Gastrocnemius medialis (tissue), 4 donors: ENCODE measurements at regions of chr17 and their contacts with region 1.

Region 1: GRCh38 chr17:27892866-27893769 is at the start of gene LYRM9:
- DNase-seq: peak; percentile 75 to 88
- ATAC-seq: peak; percentile 96 to 97
- H3K4me3 ChIP-seq: peak within 1 kb of the TSS; percentile 66 to 91 (median 85)
- H3K27ac ChIP-seq: peak within 1 kb of the TSS; percentile 84 to 88 (median 86)
- H3K4me1 ChIP-seq: peaks cover 6 to 7% of the 10 kb centered on the region in 2 donors
- H3K27me3 ChIP-seq: no peaks in the 10 kb centered on the region
- CTCF ChIP-seq: peak; percentile 81 to 98 (median 90)
- POLR2A ChIP-seq: peak; percentile 21 to 30
- total RNA-seq, gene LYRM9: 5.9 to 37.2 (median 9.6) TPM

Region 2: GRCh38 chr17:27793168-27793905 is 99.8 kb before region 1 on chr17:
- in situ Hi-C with region 1: loop called in 1 of 4 experiments (anchors 25 kb)
- intact Hi-C with region 1: no loop called
- DNase-seq: no peak
- ATAC-seq: no peak
- H3K4me3 ChIP-seq: peak overlapping the region; percentile 36 to 52 (median 44)
- H3K27ac ChIP-seq: no peak overlapping the region
- H3K4me1 ChIP-seq: peaks cover 0 to 5% of the 10 kb centered on the region in 2 donors
- H3K27me3 ChIP-seq: peaks cover 0 to 18% (median 8%) of the 10 kb centered on the region in 3 donors
- CTCF ChIP-seq: no peak
- POLR2A ChIP-seq: no peak

Region 3: GRCh38 chr17:27805520-27806146 is 87.5 kb before region 1 on chr17:
- in situ Hi-C with region 1: loop called in 3 of 4 experiments (anchors 10 kb)
- intact Hi-C with region 1: loop called (anchors 1 kb)
- DNase-seq: peak; percentile 49 to 68
- ATAC-seq: peak; percentile 92 to 95
- H3K4me3 ChIP-seq: peak overlapping the region; percentile 28 to 52 (median 39)
- H3K27ac ChIP-seq: no peak overlapping the region
- H3K4me1 ChIP-seq: peaks cover 2 to 5% of the 10 kb centered on the region in 2 donors
- H3K27me3 ChIP-seq: no peaks in the 10 kb centered on the region
- CTCF ChIP-seq: peak; percentile 60 to 76 (median 73)
- POLR2A ChIP-seq: no peak

Region 4: DNA sequence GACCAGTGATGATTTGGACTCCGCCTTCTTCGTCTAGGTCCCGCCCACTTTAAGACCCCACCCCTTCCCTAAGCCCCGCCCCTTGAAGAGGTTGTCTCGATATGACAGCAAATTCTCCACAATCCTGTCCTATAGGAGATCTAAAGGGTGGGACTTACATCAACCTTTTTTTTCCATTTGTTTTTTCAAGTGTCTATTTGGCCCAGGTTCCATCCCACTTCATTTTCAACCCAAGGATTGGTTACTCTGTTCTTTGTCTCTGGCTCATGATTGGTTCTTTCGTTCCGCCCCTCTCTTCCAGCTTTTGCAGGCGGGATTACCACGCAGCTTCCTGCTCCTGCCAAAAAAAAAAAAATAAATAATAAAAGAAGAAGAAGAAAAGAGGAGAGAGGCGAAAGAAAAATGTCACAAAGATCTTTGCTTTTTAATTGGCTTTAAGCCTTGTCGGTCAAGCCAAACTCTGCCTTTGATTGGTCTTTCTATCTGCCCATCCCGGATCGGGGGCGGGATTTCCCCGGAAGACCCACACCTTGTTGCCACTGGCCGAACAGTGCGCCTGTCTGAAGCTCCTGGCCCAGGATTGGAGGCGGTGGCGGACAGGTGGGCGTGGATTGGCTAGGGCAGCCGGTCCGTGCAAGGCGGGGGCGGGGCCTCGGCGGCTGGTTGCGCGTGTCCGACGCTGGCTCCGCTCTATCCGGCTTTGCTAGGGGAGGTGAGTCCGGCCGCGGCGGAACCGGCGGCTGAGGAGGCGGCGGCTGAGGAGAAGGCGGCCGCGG is 148.1 kb after region 1 on chr17:
- in situ Hi-C with region 1: no loop called
- intact Hi-C with region 1: loop called (anchors 2 kb)
- DNase-seq: peak; percentile 100
- ATAC-seq: peak; percentile 94 to 97
- H3K4me3 ChIP-seq: peak overlapping the region; percentile 80 to 97 (median 86)
- H3K27ac ChIP-seq: peak overlapping the region; percentile 89 to 95 (median 92)
- H3K4me1 ChIP-seq: peaks cover 36 to 38% of the 10 kb centered on the region in 2 donors
- H3K27me3 ChIP-seq: no peaks in the 10 kb centered on the region
- CTCF ChIP-seq: no peak
- POLR2A ChIP-seq: peak; percentile 59 to 72